ENCODE measurements at regions of chr12 and their contacts with region 1.

Region 1: DNA sequence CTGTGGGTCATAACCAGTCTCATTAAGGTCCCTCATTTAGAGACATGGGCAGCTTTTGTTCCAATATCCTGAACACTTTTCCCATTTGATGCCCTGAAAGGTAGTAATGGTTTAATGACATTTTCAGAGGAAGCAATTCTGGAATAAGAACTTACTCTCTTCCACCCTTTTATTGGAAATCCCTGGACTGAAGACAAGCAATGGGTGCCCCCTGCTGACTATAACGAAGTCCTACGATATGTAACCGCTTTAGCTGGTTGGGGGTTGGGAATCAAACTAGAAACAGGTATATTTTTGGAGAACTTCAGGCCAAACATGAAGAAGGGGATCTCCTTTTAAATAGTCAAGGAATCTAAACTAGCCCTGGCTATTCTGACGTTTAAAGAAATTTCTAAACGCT is 20.5 kb downstream of the SARNP start:
- DNase-seq: no peak
- H3K4me3 Mint-ChIP-seq: no peak overlapping the region
- H3K27ac Mint-ChIP-seq: no peak overlapping the region
- H3K4me1 Mint-ChIP-seq: peaks cover 14% of the 10 kb centered on the region
- H3K27me3 Mint-ChIP-seq: no peaks in the 10 kb centered on the region

Region 2: DNA sequence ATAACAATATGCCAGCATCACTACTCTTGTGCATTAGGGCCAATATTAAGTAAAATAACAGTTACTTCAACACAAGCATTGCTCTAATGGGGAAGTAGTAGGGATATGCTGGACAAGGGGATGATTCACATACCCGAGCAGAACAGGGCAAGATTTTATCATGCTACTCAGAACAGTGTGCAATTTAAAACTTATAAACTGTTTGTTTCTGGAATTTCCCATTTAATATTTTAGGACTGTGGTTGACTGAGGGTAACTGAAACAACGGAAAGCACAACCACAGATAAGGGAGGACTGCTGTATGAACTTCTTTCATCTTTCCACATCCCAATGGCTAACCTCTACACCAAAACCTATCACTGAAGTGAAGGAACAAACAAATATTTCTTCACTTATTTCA is 16.4 kb before region 1 on chr12:
- intact Hi-C with region 1: loop called (anchors 1 kb)
- DNase-seq: no peak
- H3K4me3 Mint-ChIP-seq: no peak overlapping the region
- H3K27ac Mint-ChIP-seq: peak overlapping the region; percentile 73
- H3K4me1 Mint-ChIP-seq: peaks cover 27% of the 10 kb centered on the region
- H3K27me3 Mint-ChIP-seq: no peaks in the 10 kb centered on the region

Measured in activated T-helper 1 cell treated with anti-CD3 and anti-CD28 coated beads, Interleukin-12 subunit alpha, Interleukin-12 subunit beta, Interleukin-2, Interleukin-4 antibody, amounts not matched to agents 30 ng/mL and 10 ng/mL and 1 ng/mL, durations not matched to agents 14 hours and 24 hours and 36 hours (primary cell).